Naive thymus-derived CD4-positive, alpha-beta T cell (primary cell): ENCODE measurements at regions of chr11 and their contacts with region 1.

Region 1: DNA sequence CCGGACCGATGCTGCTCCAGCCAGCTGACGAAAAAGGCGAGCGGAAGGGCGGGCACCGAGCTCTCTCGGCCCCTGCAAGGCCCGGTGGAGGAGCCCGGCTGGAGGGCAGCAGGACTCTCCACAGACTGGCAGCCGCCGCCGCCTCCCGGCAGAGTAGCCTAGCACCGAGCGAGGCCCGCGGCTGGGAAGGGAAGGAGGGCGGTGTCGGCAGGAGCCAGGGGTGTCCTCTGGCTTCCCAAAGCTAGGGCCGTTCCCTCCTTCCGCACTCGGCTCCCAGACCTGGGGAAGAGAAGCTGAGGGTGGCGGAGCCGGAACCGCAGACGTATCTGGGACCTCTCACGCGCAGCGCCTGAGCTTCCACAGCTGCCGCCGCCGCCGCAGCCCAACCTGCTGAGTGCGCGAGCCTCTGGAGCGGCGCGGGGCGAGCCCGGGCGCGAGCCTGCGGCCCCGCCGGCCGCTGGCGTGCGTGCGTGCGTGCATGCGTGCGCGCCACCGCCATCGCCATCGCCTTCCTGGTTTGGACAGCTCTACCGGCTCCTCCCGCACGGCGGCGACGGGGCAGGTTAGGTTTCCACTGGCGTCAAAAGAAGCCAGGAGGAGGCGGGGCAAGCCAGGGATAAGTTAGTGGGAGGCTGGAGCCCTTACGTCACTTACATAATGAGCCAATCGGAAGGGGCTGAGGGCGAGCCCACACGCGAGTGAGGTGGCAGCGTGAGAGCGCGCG is at the start of gene RAB6A:
- DNase-seq: peak; percentile 94 to 100 (median 100)
- ATAC-seq: peak; percentile 94
- H3K4me3 ChIP-seq: peak within 1 kb of the TSS; percentile 87
- H3K4me3 Mint-ChIP-seq: peak within 1 kb of the TSS; percentile 89 to 98 (median 94)
- H3K27ac ChIP-seq: peak within 1 kb of the TSS; percentile 89
- H3K27ac Mint-ChIP-seq: peak within 1 kb of the TSS; percentile 86 to 98 (median 92)
- H3K4me1 ChIP-seq: peaks cover 14 to 15% of the 10 kb centered on the region in 2 donors
- H3K4me1 Mint-ChIP-seq: peaks cover 19 to 40% (median 32%) of the 10 kb centered on the region in 7 donors
- H3K27me3 ChIP-seq: no peaks in the 10 kb centered on the region
- H3K27me3 Mint-ChIP-seq: peaks cover 0 to 5% (median 0%) of the 10 kb centered on the region in 5 donors
- total RNA-seq, gene RAB6A: 54.9 to 94.5 (median 80.0) TPM

Region 2: DNA sequence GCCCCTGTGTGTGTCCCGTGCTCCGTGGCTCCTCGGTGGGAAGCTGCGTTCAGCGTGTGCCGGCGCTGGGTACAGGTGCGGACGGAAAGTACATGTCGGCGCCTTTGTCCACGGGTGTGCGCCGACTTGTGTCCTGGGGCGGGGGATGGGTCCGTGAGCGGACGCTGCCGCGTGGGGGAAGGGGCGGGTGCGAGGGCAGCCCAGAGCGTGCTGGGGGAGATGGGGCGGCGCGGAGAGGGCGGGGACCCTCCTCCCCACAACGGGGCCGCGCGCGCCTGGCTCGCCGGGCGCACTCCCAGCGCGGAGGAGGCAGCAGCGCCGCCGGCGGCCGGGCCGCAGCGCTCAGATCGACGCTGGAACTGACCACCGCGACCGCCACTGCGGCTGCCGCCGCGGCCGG is 418.2 kb before region 1 on chr11:
- CTCF ChIA-PET with region 1: no interaction called
- POLR2A ChIA-PET with region 1: no interaction called
- intact Hi-C with region 1: no loop called
- DNase-seq: no peak
- ATAC-seq: no peak
- H3K4me3 ChIP-seq: no peak overlapping the region
- H3K4me3 Mint-ChIP-seq: no peak overlapping the region
- H3K27ac ChIP-seq: no peak overlapping the region
- H3K27ac Mint-ChIP-seq: no peak overlapping the region
- H3K4me1 ChIP-seq: no peaks in the 10 kb centered on the region
- H3K4me1 Mint-ChIP-seq: no peaks in the 10 kb centered on the region
- H3K27me3 ChIP-seq: no peaks in the 10 kb centered on the region
- H3K27me3 Mint-ChIP-seq: peaks cover 0 to 10% (median 7%) of the 10 kb centered on the region in 5 donors

Region 3: DNA sequence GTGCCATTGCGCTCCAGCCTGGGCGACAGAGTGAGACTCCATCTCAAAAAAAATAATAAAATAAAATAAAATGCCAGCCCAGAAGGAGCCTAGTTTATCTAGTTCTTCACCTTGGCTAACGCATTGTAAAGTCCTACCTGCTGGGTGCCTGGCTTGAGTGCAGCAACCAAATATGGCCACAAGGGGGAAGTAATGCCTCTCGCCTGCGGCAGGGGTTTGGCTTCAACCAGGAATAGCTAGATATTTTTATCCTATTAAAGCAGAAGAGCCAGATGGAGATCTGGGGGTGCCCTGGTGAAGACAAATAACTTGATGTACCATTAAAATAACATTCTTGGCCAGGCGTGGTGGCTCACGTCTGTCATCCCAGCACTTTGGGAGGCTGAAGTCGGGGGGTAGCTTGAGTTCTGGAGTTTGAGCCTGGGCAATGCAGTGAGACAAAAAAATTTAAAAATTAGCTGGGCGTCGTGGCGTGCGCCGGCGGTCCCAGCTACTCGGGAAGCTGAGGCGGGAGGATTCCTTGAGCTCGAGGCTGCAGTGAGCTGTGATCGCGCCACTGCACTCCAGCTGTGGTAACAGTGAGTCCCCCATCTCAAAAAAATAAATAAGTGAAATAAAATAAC is 135.0 kb before region 1 on chr11:
- CTCF ChIA-PET with region 1: no interaction called
- POLR2A ChIA-PET with region 1: no interaction called
- intact Hi-C with region 1: no loop called
- DNase-seq: peak; percentile 38 to 75 (median 66)
- ATAC-seq: peak; percentile 88
- H3K4me3 ChIP-seq: no peak overlapping the region
- H3K4me3 Mint-ChIP-seq: peak overlapping the region in 1 of 10 donors; percentile 68
- H3K27ac ChIP-seq: no peak overlapping the region
- H3K27ac Mint-ChIP-seq: peak overlapping the region in 1 of 9 donors; percentile 59
- H3K4me1 ChIP-seq: peaks cover 0 to 3% of the 10 kb centered on the region in 2 donors
- H3K4me1 Mint-ChIP-seq: peaks cover 0 to 15% (median 0%) of the 10 kb centered on the region in 7 donors
- H3K27me3 ChIP-seq: no peaks in the 10 kb centered on the region
- H3K27me3 Mint-ChIP-seq: peaks cover 13 to 29% (median 27%) of the 10 kb centered on the region in 5 donors

Region 4: GRCh38 chr11:73647459-73648100 is 113.3 kb before region 1 on chr11:
- CTCF ChIA-PET with region 1: no interaction called
- POLR2A ChIA-PET with region 1: interaction called, 3 read pairs
- intact Hi-C with region 1: loop called in 1 of 2 experiments (anchors 1 kb)
- DNase-seq: peak; percentile 81 to 96 (median 94)
- ATAC-seq: peak; percentile 100
- H3K4me3 ChIP-seq: peak overlapping the region; percentile 62
- H3K4me3 Mint-ChIP-seq: peak overlapping the region; percentile 71 to 96 (median 92)
- H3K27ac ChIP-seq: peak overlapping the region; percentile 71
- H3K27ac Mint-ChIP-seq: peak overlapping the region; percentile 83 to 98 (median 94)
- H3K4me1 ChIP-seq: peaks cover 7 to 15% of the 10 kb centered on the region in 2 donors
- H3K4me1 Mint-ChIP-seq: peaks cover 10 to 41% (median 34%) of the 10 kb centered on the region in 7 donors
- H3K27me3 ChIP-seq: no peaks in the 10 kb centered on the region
- H3K27me3 Mint-ChIP-seq: peaks cover 0 to 8% (median 0%) of the 10 kb centered on the region in 5 donors

Region 5: DNA sequence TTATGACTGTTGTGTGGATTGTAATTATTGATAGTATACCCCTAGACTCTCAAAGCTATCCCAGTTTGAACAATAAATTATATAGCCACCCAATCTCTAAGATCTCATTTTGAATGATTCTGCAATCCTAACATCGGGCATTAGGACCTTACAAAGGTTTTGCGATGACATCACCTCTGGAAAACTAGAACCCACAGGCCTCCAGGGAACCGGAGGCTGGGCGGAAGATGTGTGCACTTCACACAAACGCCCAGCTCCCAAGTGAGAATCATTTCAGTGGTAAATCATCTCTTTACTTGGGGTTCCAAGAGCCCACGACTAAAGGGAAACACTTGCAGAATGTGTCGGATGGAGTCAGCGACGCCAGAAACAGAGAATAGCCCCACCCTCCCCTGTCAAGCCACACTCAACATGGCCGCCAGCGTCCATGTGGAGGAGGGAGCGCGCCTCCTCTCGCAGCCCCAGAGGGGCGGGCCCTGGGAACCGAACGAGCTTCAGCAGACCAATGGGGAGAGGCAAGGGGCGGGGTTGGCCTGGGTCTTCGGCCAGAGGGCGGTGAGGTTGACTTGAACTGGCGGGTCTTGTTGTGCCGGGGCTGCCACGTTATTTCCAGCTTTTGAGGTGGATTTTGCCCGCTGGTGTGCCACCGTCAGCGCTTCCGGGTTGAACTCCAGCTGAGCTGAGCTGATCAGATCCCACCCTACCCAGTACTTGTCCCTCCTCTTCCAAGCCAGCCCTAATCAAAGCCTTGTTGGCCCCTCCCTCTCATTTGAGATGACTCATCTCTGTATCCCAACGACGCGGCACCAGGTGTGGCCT is 18.5 kb after region 1 on chr11:
- CTCF ChIA-PET with region 1: interaction called, 22 read pairs
- POLR2A ChIA-PET with region 1: interaction called, 162 read pairs
- intact Hi-C with region 1: loop called (anchors 1 kb)
- DNase-seq: peak; percentile 88 to 98 (median 97)
- ATAC-seq: peak; percentile 99
- H3K4me3 ChIP-seq: peak overlapping the region; percentile 58
- H3K4me3 Mint-ChIP-seq: peak overlapping the region; percentile 86 to 97 (median 94)
- H3K27ac ChIP-seq: peak overlapping the region; percentile 89
- H3K27ac Mint-ChIP-seq: peak overlapping the region; percentile 94 to 100 (median 100)
- H3K4me1 ChIP-seq: peaks cover 0 to 6% of the 10 kb centered on the region in 2 donors
- H3K4me1 Mint-ChIP-seq: peaks cover 2 to 18% (median 9%) of the 10 kb centered on the region in 7 donors
- H3K27me3 ChIP-seq: no peaks in the 10 kb centered on the region
- H3K27me3 Mint-ChIP-seq: peaks cover 0 to 6% (median 0%) of the 10 kb centered on the region in 5 donors

Region 6: GRCh38 chr11:73787643-73788537 is 27.0 kb after region 1 on chr11 and contains the start of gene MRPL48:
- CTCF ChIA-PET with region 1: interaction called, 3 read pairs
- POLR2A ChIA-PET with region 1: interaction called, 20 read pairs
- intact Hi-C with region 1: loop called (anchors 1 kb)
- DNase-seq: peak; percentile 74 to 90 (median 86)
- ATAC-seq: peak; percentile 100
- H3K4me3 ChIP-seq: peak within 1 kb of the TSS; percentile 94
- H3K4me3 Mint-ChIP-seq: peak within 1 kb of the TSS; percentile 92 to 100 (median 98)
- H3K27ac ChIP-seq: peak within 1 kb of the TSS; percentile 81
- H3K27ac Mint-ChIP-seq: peak within 1 kb of the TSS; percentile 93 to 100 (median 99)
- H3K4me1 ChIP-seq: peaks cover 10 to 13% of the 10 kb centered on the region in 2 donors
- H3K4me1 Mint-ChIP-seq: peaks cover 7 to 43% (median 30%) of the 10 kb centered on the region in 7 donors
- H3K27me3 ChIP-seq: no peaks in the 10 kb centered on the region
- H3K27me3 Mint-ChIP-seq: no peaks in the 10 kb centered on the region
- total RNA-seq, gene MRPL48: 20.3 to 50.6 (median 25.5) TPM

Region 7: DNA sequence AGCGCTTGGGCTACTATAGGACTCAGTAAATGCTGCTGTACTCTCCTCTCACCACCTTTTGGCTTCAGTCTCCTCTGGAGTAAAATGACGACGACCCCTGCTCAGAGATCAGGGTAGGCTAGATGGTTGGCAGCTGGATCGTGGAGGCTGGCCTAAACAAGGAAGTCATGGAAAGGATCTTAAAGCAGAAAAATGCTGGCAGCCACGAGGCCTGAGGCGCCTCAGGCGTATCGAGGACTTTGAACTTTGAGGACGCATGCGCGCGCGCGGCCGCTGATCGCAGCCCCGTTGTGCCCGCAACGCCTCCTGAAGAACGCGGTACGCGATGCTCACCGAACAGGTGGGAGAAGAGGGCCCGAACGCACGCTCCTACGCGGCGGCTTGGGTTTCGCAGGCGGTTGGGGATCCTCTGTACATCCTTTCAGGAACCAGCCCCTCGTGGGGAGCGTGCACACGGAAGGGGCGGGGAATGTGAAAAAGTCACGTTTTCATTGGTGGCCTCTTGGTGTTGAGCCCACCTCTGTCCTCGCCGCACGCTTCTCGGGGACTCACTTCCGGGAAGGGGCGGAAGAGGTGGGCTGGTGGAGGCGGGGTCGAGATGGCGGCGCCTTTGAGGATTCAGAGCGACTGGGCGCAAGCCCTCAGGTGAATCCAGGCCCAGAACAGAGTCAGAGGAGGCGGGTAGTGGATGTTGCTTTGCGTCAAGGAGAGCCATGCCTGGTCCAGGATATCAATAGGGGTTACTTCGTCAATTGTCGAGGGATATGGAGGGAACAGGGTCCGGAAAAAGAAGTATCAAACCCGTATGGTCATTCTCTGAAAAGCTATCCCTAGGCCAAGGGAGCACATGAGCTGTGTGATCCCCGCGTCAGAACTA is 115.8 kb after region 1 on chr11 and contains the starts of genes COA4 and PAAF1:
- CTCF ChIA-PET with region 1: no interaction called
- POLR2A ChIA-PET with region 1: no interaction called
- intact Hi-C with region 1: loop called (anchors 1 kb)
- DNase-seq: peak; percentile 72 to 95 (median 94)
- ATAC-seq: peak; percentile 99
- H3K4me3 ChIP-seq: peak within 1 kb of the TSS; percentile 94
- H3K4me3 Mint-ChIP-seq: peak within 1 kb of the TSS; percentile 94 to 98 (median 96)
- H3K27ac ChIP-seq: peak within 1 kb of the TSS; percentile 88
- H3K27ac Mint-ChIP-seq: peak within 1 kb of the TSS; percentile 92 to 100 (median 97)
- H3K4me1 ChIP-seq: peaks cover 17 to 19% of the 10 kb centered on the region in 2 donors
- H3K4me1 Mint-ChIP-seq: peaks cover 20 to 55% (median 43%) of the 10 kb centered on the region in 7 donors
- H3K27me3 ChIP-seq: no peaks in the 10 kb centered on the region
- H3K27me3 Mint-ChIP-seq: no peaks in the 10 kb centered on the region
- total RNA-seq, gene COA4: 29.1 to 75.0 (median 58.2) TPM
- total RNA-seq, gene PAAF1: 12.4 to 22.7 (median 20.3) TPM

Region 8: DNA sequence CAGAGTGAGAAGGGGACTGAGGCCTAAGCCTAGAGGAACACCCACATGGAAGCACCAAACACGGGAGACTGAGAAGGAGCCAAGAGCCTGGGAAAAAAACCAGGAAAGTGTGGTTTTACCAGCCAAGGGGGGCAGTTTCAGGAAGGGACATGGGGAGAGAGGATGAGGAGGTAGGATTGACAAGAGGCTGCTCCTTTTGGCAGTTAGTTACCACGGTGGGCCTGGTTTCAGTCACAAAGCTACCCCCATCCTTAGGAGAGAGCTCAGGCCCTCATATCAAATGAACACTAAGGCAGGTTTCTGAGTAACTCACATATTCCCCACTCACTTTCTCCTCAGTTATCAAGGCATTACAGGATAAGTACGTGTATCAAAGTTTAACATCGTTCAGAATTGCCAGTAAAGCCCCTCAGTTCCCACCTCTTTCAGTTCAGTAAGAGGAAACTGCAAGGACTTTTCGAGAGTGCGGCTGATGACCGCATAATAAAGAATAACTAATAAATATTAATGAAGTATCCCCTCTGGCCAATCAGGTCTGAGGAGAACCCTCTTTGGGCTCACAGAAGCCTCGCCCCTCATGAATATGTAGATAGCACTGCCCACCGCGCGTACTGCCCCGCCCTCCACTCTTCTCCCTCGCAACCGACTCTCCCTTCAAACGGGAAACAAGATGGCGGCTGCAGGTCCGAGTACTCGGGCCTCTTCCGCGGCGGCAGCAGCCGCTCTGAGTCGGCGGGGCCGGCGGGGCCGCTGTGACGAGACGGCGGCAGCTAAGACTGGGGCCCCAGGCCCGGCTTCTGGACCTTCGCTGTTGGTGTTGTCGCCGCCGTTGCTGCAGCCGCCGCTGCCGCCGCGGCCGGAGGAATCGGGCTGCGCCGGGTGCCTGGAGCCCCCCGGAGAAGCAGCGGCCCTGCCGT is 987.6 kb after region 1 on chr11 and contains the start of gene RNF169:
- CTCF ChIA-PET with region 1: no interaction called
- POLR2A ChIA-PET with region 1: no interaction called
- intact Hi-C with region 1: loop called in 1 of 2 experiments (anchors 5 kb)
- DNase-seq: peak; percentile 59 to 88 (median 84)
- ATAC-seq: peak; percentile 100
- H3K4me3 ChIP-seq: peak within 1 kb of the TSS; percentile 73
- H3K4me3 Mint-ChIP-seq: peak within 1 kb of the TSS; percentile 81 to 99 (median 94)
- H3K27ac ChIP-seq: peak within 1 kb of the TSS; percentile 79
- H3K27ac Mint-ChIP-seq: peak within 1 kb of the TSS; percentile 84 to 97 (median 91)
- H3K4me1 ChIP-seq: peaks cover 16 to 29% of the 10 kb centered on the region in 2 donors
- H3K4me1 Mint-ChIP-seq: peaks cover 25 to 48% (median 42%) of the 10 kb centered on the region in 7 donors
- H3K27me3 ChIP-seq: no peaks in the 10 kb centered on the region
- H3K27me3 Mint-ChIP-seq: no peaks in the 10 kb centered on the region
- total RNA-seq, gene RNF169: 17.9 to 25.5 (median 22.2) TPM